Mammary epithelial cell (primary cell): ENCODE measurements at regions of chr10 and their contacts with region 1.

Region 1: GRCh38 chr10:69337296-69338132 is 59.2 kb downstream of the HK1 start:
- DNase-seq: peak; percentile 95
- H3K4me3 ChIP-seq: peak overlapping the region in 1 of 3 experiments; percentile 17
- H3K27ac ChIP-seq: peak overlapping the region; percentile 72
- H3K4me1 ChIP-seq: peaks cover 81% of the 10 kb centered on the region
- H3K27me3 ChIP-seq: no peaks in the 10 kb centered on the region
- CTCF ChIP-seq: no peak

Region 2: DNA sequence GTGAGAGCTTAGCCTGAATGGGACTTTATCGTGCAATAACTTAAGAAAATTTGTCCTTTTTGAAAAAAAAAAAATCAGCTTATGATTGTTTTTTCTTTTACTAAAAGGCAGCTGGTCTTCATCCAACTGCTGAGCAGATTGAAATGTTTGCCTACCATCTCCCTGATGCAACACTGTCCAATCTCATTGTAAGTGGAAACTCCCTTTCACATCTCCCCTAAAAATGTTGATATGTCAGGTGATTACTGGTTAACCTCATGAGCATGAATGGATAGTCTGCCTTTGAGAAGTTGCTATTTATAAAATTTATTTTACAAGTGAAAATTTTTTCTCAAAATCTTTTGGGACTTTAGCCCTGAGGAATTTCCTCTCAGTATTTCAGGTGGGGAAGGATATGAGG is 135.2 kb before region 1 on chr10:
- CTCF ChIA-PET with region 1: no interaction called
- dilution Hi-C with region 1: no loop called
- in situ Hi-C with region 1: no loop called
- intact Hi-C with region 1: no loop called
- DNase-seq: no peak
- H3K4me3 ChIP-seq: no peak overlapping the region
- H3K27ac ChIP-seq: no peak overlapping the region
- H3K4me1 ChIP-seq: no peaks in the 10 kb centered on the region
- H3K27me3 ChIP-seq: no peaks in the 10 kb centered on the region
- CTCF ChIP-seq: no peak

Region 3: GRCh38 chr10:69348816-69349541 is 11.5 kb after region 1 on chr10:
- CTCF ChIA-PET with region 1: no interaction called
- dilution Hi-C with region 1: no loop called
- in situ Hi-C with region 1: no loop called
- intact Hi-C with region 1: loop called (anchors 1 kb)
- DNase-seq: peak; percentile 97
- H3K4me3 ChIP-seq: no peak overlapping the region
- H3K27ac ChIP-seq: peak overlapping the region; percentile 87
- H3K4me1 ChIP-seq: peaks cover 39% of the 10 kb centered on the region
- H3K27me3 ChIP-seq: no peaks in the 10 kb centered on the region
- CTCF ChIP-seq: no peak

Region 4: GRCh38 chr10:69360485-69361324 is 23.2 kb after region 1 on chr10:
- CTCF ChIA-PET with region 1: no interaction called
- dilution Hi-C with region 1: no loop called
- in situ Hi-C with region 1: no loop called
- intact Hi-C with region 1: loop called (anchors 1 kb)
- DNase-seq: peak; percentile 88
- H3K4me3 ChIP-seq: no peak overlapping the region
- H3K27ac ChIP-seq: peak overlapping the region; percentile 10
- H3K4me1 ChIP-seq: peaks cover 43% of the 10 kb centered on the region
- H3K27me3 ChIP-seq: no peaks in the 10 kb centered on the region
- CTCF ChIP-seq: no peak

Region 5: DNA sequence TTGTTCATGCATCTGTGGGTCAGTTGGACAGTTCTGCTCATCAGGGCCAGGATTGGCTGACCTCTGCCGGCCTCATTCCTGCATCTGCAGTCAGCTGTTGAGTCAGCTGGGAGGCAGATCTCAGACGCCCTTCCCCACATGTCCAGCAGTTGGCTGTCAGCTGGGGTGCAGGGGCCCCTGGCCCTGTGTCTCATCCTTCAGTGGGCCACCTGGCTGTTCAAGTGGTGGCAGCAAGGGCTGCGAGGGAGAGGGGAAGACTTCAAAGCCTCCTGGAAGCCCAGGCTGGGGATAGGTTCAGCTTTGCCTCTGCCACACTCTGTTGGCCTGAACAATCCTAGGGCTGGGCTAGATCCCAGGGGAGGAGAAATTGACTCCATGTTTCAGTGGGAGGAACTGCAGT is 46.0 kb after region 1 on chr10:
- CTCF ChIA-PET with region 1: no interaction called
- dilution Hi-C with region 1: no loop called
- in situ Hi-C with region 1: loop called in 1 of 2 experiments (anchors 5 kb)
- intact Hi-C with region 1: loop called (anchors 2 kb)
- DNase-seq: no peak
- H3K4me3 ChIP-seq: no peak overlapping the region
- H3K27ac ChIP-seq: no peak overlapping the region
- H3K4me1 ChIP-seq: peaks cover 42% of the 10 kb centered on the region
- H3K27me3 ChIP-seq: no peaks in the 10 kb centered on the region
- CTCF ChIP-seq: peak in 1 of 2 donors; percentile 13

Region 6: GRCh38 chr10:69392481-69393000 is 55.0 kb after region 1 on chr10:
- CTCF ChIA-PET with region 1: no interaction called
- dilution Hi-C with region 1: no loop called
- in situ Hi-C with region 1: no loop called
- intact Hi-C with region 1: loop called (anchors 1 kb)
- DNase-seq: peak; percentile 66
- H3K4me3 ChIP-seq: no peak overlapping the region
- H3K27ac ChIP-seq: no peak overlapping the region
- H3K4me1 ChIP-seq: peaks cover 6% of the 10 kb centered on the region
- H3K27me3 ChIP-seq: no peaks in the 10 kb centered on the region
- CTCF ChIP-seq: peak; percentile 92 to 99